Activated naive CD4-positive, alpha-beta T cell treated with anti-CD3 and anti-CD28 coated beads for 36 hours (primary cell): ENCODE measurements at regions of chr18 and their contacts with region 1.

Region 1: DNA sequence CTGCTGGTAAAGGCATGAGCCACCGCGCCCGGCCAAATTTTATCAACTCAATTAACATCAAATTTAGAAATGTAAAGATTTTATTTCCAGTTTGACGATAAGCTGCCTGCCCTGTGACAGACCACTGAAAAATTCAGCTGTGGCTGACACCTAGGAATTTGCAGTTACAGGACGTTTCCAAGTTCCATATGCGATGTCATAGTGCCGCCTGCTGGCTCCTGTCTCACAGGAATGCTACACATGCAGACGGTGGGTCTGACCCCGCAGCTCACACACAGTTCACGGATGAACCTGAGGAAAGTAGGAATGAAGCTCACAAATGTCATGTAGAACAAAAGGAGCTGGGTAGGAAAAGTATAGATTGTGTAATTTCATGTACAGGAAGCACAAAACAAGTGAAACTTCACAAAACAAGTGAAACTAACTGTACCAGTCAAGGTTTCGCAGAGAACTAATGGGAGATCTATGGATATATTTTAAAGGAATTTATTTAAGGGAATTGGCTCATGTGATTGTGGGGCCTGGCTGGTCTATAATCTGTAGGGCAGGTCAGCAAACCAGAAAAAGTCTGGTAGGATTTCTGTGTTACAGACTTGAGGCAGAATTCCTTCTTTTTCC is 13.2 kb upstream of the SEH1L start:
- DNase-seq: peak; percentile 89
- H3K4me3 Mint-ChIP-seq: no peak overlapping the region
- H3K27ac Mint-ChIP-seq: no peak overlapping the region
- H3K4me1 Mint-ChIP-seq: peaks cover 3% of the 10 kb centered on the region
- H3K27me3 Mint-ChIP-seq: no peaks in the 10 kb centered on the region

Region 2: GRCh38 chr18:12726774-12727550 is 207.6 kb before region 1 on chr18:
- CTCF ChIA-PET with region 1: interaction called, 116 read pairs
- intact Hi-C with region 1: loop called (anchors 1 kb)
- DNase-seq: peak; percentile 72
- H3K4me3 Mint-ChIP-seq: no peak overlapping the region
- H3K27ac Mint-ChIP-seq: no peak overlapping the region
- H3K4me1 Mint-ChIP-seq: peaks cover 4% of the 10 kb centered on the region
- H3K27me3 Mint-ChIP-seq: no peaks in the 10 kb centered on the region

Region 3: GRCh38 chr18:12744103-12744502 is 190.5 kb before region 1 on chr18:
- CTCF ChIA-PET with region 1: interaction called, 41 read pairs
- intact Hi-C with region 1: loop called (anchors 1 kb)
- DNase-seq: no peak
- H3K4me3 Mint-ChIP-seq: no peak overlapping the region
- H3K27ac Mint-ChIP-seq: no peak overlapping the region
- H3K4me1 Mint-ChIP-seq: no peaks in the 10 kb centered on the region
- H3K27me3 Mint-ChIP-seq: no peaks in the 10 kb centered on the region

Region 4: DNA sequence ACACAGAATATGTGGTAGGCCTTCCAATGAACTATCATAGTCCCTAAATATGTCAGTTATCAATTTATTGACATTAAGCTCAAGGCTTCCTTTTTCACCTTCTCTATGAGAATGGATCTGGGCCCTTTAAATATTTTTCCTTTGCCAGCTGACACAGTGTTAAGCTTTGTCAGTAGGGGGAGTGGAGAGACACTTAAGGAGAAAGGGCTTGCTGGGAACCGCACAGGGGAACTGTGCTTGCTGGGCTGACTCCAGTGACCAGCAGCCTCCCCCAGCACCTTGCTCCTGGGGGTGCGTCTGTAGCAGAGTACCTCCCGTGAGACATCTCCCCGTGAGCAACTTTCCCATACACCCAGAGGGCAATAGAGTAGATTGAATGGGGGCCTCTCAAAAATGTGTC is 44.1 kb before region 1 on chr18:
- CTCF ChIA-PET with region 1: interaction called, 19 read pairs
- intact Hi-C with region 1: loop called (anchors 1 kb)
- DNase-seq: no peak
- H3K4me3 Mint-ChIP-seq: no peak overlapping the region
- H3K27ac Mint-ChIP-seq: no peak overlapping the region
- H3K4me1 Mint-ChIP-seq: peaks cover 11% of the 10 kb centered on the region
- H3K27me3 Mint-ChIP-seq: peaks cover 16% of the 10 kb centered on the region

Region 5: DNA sequence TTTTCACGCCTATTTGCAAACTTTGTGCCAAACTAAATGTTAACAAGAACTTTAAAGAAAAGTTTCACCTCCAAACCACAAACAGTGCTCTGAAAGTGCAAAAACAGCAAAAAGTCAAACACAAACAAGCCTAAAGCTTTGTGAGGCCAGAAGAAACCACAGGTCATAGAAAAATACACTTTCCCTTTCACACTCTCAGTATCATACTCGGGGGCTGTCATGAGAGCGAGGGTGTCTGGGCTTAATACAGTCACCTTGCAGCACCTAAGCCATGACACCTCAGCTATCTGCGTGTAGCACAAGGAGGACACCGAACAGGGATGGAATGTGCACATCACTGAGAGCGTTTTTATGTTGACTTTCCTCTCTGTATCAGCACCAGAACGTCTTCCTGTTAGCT is 13.4 kb before region 1 on chr18:
- CTCF ChIA-PET with region 1: interaction called, 31 read pairs
- intact Hi-C with region 1: no loop called
- DNase-seq: peak; percentile 32
- H3K4me3 Mint-ChIP-seq: no peak overlapping the region
- H3K27ac Mint-ChIP-seq: no peak overlapping the region
- H3K4me1 Mint-ChIP-seq: peaks cover 4% of the 10 kb centered on the region
- H3K27me3 Mint-ChIP-seq: no peaks in the 10 kb centered on the region

Region 6: DNA sequence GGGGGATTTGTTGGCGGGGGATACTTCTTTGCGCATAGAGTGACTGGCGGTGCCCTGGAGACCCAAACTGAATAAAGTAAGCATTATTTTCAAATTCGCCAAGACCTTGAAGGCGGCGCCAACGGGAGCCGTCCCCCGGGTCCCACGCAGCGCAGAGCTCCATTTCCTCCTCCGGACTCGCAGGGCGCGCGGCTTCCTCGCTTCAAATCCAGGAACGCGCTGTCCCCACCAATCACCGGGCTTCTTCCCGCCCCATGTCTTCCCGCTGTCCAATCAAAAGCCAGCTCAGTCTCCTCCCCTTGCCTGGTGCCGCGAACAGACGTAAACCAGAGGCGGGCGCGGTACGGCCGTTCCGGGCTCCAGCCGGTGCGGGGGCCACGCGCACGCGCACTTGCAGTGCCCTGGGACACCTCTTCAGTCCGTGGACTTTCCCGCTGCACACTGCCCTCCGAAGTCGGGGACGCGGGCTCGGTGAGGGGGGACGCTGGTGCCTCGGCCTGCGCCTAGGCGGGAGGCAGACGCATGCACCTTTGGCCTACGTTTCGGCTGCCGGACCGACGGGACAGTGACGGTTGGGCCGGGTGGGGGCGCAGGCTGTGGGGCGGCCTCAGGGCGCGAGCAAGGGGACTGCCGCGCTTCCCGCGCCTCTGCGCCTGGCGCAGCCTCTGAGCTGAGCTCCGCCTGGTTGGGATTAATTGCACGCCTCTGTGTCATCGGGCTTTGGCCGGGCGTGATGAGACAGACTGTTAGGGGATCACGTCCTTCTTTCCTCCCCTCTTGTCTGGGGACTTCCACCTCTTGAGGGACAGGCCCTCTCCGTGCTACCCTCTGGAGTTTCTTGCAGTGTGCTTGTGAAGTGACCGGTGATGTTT is 56.6 kb after region 1 on chr18 and contains the start of gene CEP192:
- CTCF ChIA-PET with region 1: no interaction called
- intact Hi-C with region 1: no loop called
- DNase-seq: peak; percentile 99
- H3K4me3 Mint-ChIP-seq: peak within 1 kb of the TSS; percentile 99
- H3K27ac Mint-ChIP-seq: peak within 1 kb of the TSS; percentile 97
- H3K4me1 Mint-ChIP-seq: peaks cover 10% of the 10 kb centered on the region
- H3K27me3 Mint-ChIP-seq: no peaks in the 10 kb centered on the region
- total RNA-seq, gene CEP192: 32.7 to 33.6 TPM